GM12878 (cell line): ENCODE measurements at regions of chr10 and their contacts with region 1.

Region 1: DNA sequence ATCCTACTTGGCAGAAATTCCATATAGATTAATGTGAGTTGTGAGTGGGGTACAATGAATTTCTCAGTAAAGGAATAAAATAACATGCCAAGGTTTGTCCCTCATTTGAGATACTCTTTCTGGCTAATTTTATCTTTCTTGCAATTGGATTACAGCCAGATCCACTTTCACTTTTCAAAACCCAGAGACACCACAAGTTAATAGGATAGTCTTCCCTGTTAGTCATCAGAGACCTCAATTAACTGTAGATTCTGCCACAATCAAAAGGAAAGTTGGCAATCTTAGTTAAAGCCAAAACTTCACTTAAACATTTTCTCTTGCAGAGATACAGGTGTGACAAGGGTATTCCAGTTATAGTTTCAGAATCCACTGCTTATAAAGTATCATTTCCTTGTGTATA is 91.4 kb upstream of the PHYHIPL start:
- DNase-seq: no peak
- ATAC-seq: no peak
- H3K4me3 ChIP-seq: no peak overlapping the region
- H3K27ac ChIP-seq: no peak overlapping the region
- H3K4me1 ChIP-seq: 0 out of 2 replicates have a peak, but pooled peaks cover 3% of the 10 kb centered on the region
- H3K27me3 ChIP-seq: no peaks in the 10 kb centered on the region
- CTCF ChIP-seq: no peak
- EP300 ChIP-seq: no peak
- POLR2A ChIP-seq: no peak
- RAD21 ChIP-seq: no peak

Region 2: DNA sequence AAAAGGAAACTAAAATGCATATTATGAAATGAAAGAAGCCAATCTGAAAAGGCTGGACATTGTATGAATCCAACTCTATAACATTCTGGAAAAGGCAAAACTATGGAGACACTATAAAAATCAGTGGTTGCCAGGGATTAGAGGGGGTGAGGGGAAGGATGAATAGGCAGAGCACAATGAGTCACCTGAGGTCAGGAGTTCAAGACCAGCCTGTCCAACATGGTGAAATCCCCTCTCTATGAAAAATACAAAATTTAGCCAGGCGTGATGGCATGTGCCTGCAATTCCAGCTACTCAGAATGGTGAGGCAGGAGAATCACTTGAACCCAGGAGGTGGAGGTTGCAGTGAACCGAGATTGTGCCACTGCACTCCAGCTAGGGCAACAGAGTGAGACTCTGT is 233.4 kb before region 1 on chr10:
- CTCF ChIA-PET with region 1: no interaction called
- POLR2A ChIA-PET with region 1: no interaction called
- RAD21 ChIA-PET with region 1: no interaction called
- SMC1A ChIA-PET with region 1: no interaction called
- in situ Hi-C with region 1: no loop called
- intact Hi-C with region 1: no loop called
- DNase-seq: no peak
- ATAC-seq: no peak
- H3K4me3 ChIP-seq: no peak overlapping the region
- H3K27ac ChIP-seq: no peak overlapping the region
- H3K4me1 ChIP-seq: no peaks in the 10 kb centered on the region
- H3K27me3 ChIP-seq: no peaks in the 10 kb centered on the region
- CTCF ChIP-seq: no peak
- EP300 ChIP-seq: no peak
- POLR2A ChIP-seq: no peak
- RAD21 ChIP-seq: no peak

Region 3: DNA sequence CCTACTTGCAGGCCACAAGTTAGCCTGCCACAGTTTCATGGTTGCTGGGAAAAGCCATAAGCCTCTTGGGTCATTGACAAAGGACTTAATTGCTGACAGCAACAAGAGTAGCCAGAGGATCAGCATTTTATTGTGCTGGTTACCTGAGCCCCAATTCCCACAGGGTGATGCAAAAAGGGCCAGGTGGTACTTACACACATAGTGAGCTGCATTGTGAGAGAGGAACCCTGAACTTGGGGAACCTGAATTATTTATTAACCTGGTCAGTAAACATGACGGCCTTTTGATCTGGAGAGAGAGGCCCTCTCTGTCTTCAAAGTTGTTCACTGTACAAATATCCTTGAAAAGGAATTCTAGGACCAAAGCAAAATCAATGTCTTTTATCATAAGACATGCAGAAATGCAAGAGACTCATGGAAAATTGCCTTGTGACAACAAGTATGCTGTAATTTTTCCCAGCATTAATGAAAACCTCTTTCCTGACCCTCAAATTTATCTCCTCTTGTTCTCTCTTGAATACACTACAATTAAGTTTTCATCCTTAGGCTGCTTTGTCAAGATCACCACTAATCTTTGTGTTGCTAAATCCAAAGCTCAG is 11.5 kb before region 1 on chr10:
- CTCF ChIA-PET with region 1: interaction called, 9 read pairs
- POLR2A ChIA-PET with region 1: interaction called, 18 read pairs
- RAD21 ChIA-PET with region 1: interaction called, 28 read pairs
- SMC1A ChIA-PET with region 1: interaction called, 94 read pairs
- in situ Hi-C with region 1: no loop called
- intact Hi-C with region 1: no loop called
- DNase-seq: no peak
- ATAC-seq: peak; percentile 14; the same call in 1 of the 3 replicates
- H3K4me3 ChIP-seq: no peak overlapping the region
- H3K27ac ChIP-seq: no peak overlapping the region
- H3K4me1 ChIP-seq: no peaks in the 10 kb centered on the region
- H3K27me3 ChIP-seq: no peaks in the 10 kb centered on the region
- CTCF ChIP-seq: no peak
- EP300 ChIP-seq: no peak
- POLR2A ChIP-seq: no peak
- RAD21 ChIP-seq: no peak